Common myeloid progenitor, CD34-positive (primary cell): ENCODE measurements at regions of chr16 and their contacts with region 1.

Region 1: GRCh38 chr16:87877938-87878507 is 8.7 kb upstream of the SLC7A5 start:
- DNase-seq: no peak
- H3K4me3 ChIP-seq: no peak overlapping the region
- H3K27ac ChIP-seq: no peak overlapping the region
- H3K4me1 ChIP-seq: peaks cover 0 to 18% (median under 1%) of the 10 kb centered on the region in 4 experiments
- H3K27me3 ChIP-seq: peaks cover 0 to 20% (median 3%) of the 10 kb centered on the region in 5 experiments

Region 2: GRCh38 chr16:87765776-87766484 is 112.1 kb before region 1 on chr16 and contains the start of gene KLHDC4:
- CTCF ChIA-PET with region 1: interaction called, 27 read pairs
- POLR2A ChIA-PET with region 1: no interaction called
- DNase-seq: peak; percentile 89 to 93 (median 93)
- H3K4me3 ChIP-seq: peak within 1 kb of the TSS; percentile 81 to 99 (median 93)
- H3K27ac ChIP-seq: peak within 1 kb of the TSS; percentile 74 to 94
- H3K4me1 ChIP-seq: peaks cover 4 to 21% (median 15%) of the 10 kb centered on the region in 4 experiments
- H3K27me3 ChIP-seq: no peaks in the 10 kb centered on the region

Region 3: DNA sequence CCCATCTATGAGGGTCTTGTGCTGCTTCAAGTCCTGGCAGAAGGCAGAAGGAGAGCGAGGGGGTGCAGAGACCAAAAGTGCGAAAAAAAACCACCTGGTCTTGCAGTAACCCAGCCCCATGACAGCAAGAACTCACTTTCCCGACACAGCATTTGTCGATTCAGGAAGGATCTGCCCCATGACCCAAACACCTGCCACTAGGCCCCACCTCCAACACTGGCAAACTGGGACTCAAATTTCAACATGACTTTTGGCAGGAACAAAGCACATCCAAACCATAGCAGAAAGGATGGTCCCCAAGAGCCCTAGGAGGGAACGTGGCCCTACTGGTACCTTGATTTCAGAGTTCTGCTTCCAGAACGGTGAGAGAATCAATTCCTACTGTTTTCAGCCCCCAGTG is 77.5 kb before region 1 on chr16:
- CTCF ChIA-PET with region 1: no interaction called
- POLR2A ChIA-PET with region 1: no interaction called
- DNase-seq: no peak
- H3K4me3 ChIP-seq: no peak overlapping the region
- H3K27ac ChIP-seq: no peak overlapping the region
- H3K4me1 ChIP-seq: peaks cover 0 to 13% (median 4%) of the 10 kb centered on the region in 4 experiments
- H3K27me3 ChIP-seq: no peaks in the 10 kb centered on the region